PC-9 (cell line): ENCODE measurements at regions of chr19 and their contacts with region 1.

Region 1: GRCh38 chr19:44808463-44809371 is at the start of gene BCAM:
- DNase-seq: peak; percentile 55 to 88
- H3K4me3 ChIP-seq: peak within 1 kb of the TSS; percentile 95
- H3K27ac ChIP-seq: peak within 1 kb of the TSS; percentile 80
- H3K4me1 ChIP-seq: peaks cover 43% of the 10 kb centered on the region
- H3K27me3 ChIP-seq: no peaks in the 10 kb centered on the region
- CTCF ChIP-seq: no peak
- total RNA-seq, gene BCAM: 146 and 199 TPM in 2 replicates

Region 2: GRCh38 chr19:44764975-44765948 is 43.5 kb before region 1 on chr19:
- CTCF ChIA-PET with region 1: interaction called, 7 read pairs
- POLR2A ChIA-PET with region 1: interaction called, 10 read pairs
- intact Hi-C with region 1: no loop called
- DNase-seq: peak in 1 of 2 experiments; percentile 71
- H3K4me3 ChIP-seq: no peak overlapping the region
- H3K27ac ChIP-seq: peak overlapping the region; percentile 31; the same call in 1 of the 2 replicates
- H3K4me1 ChIP-seq: peaks cover 22% of the 10 kb centered on the region
- H3K27me3 ChIP-seq: no peaks in the 10 kb centered on the region
- CTCF ChIP-seq: no peak

Region 3: GRCh38 chr19:44782729-44783128 is 26.0 kb before region 1 on chr19:
- CTCF ChIA-PET with region 1: no interaction called
- POLR2A ChIA-PET with region 1: interaction called, 18 read pairs
- intact Hi-C with region 1: no loop called
- DNase-seq: no peak
- H3K4me3 ChIP-seq: no peak overlapping the region
- H3K27ac ChIP-seq: 0 out of 2 replicates have a peak overlapping the region, but pooled peaks have one; percentile 40
- H3K4me1 ChIP-seq: peaks cover 32% of the 10 kb centered on the region
- H3K27me3 ChIP-seq: no peaks in the 10 kb centered on the region
- CTCF ChIP-seq: no peak; the same call in 1 of the 2 replicates

Region 4: DNA sequence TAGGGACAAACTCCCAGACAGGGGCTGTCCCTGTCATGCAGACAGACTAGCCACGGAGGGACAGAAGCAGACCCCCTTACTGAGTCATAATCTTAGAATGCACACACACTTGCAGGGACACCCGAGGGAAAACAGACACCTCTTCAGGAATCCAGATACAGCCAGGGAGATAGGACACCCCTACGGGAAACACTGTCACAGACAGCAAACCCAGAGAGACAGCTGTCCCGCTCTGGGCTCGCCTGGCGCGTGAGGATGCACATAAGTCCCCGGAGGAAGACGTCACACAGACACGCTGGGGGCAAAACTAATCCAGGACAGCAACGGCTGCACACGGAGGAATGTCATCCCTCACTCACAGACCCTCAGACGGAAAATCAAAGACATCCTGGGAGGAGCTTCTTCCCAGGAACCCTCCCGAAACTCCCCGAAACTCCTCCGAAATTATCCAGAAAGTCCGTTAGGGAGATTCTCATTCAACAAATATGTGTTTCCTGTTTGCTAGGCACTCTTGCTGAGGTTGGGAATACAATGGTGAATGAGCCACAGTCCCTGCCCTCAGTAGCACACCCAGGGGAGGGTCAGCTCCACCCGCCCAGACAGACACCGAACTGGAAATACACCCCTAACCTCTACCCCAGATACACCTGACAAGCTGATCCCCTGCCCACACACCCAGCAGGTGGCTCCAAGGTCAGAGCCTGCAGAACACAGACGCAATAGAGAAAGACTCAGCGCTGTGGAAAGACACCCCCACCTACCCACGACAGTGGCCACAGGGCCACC is 67.1 kb after region 1 on chr19:
- CTCF ChIA-PET with region 1: no interaction called
- POLR2A ChIA-PET with region 1: no interaction called
- intact Hi-C with region 1: no loop called
- DNase-seq: peak; percentile 82 to 95
- H3K4me3 ChIP-seq: peak overlapping the region; percentile 32; the same call in 1 of the 2 replicates
- H3K27ac ChIP-seq: peak overlapping the region; percentile 95
- H3K4me1 ChIP-seq: peaks cover 46% of the 10 kb centered on the region
- H3K27me3 ChIP-seq: no peaks in the 10 kb centered on the region
- CTCF ChIP-seq: no peak

Region 5: GRCh38 chr19:44897835-44898234 is 89.1 kb after region 1 on chr19:
- CTCF ChIA-PET with region 1: no interaction called
- POLR2A ChIA-PET with region 1: interaction called, 13 read pairs
- intact Hi-C with region 1: no loop called
- DNase-seq: no peak
- H3K4me3 ChIP-seq: no peak overlapping the region
- H3K27ac ChIP-seq: no peak overlapping the region
- H3K4me1 ChIP-seq: peaks cover 3% of the 10 kb centered on the region; the same call in 1 of the 2 replicates
- H3K27me3 ChIP-seq: no peaks in the 10 kb centered on the region
- CTCF ChIP-seq: no peak